ENCODE measurements at regions of chr6 and their contacts with region 1.

Region 1: DNA sequence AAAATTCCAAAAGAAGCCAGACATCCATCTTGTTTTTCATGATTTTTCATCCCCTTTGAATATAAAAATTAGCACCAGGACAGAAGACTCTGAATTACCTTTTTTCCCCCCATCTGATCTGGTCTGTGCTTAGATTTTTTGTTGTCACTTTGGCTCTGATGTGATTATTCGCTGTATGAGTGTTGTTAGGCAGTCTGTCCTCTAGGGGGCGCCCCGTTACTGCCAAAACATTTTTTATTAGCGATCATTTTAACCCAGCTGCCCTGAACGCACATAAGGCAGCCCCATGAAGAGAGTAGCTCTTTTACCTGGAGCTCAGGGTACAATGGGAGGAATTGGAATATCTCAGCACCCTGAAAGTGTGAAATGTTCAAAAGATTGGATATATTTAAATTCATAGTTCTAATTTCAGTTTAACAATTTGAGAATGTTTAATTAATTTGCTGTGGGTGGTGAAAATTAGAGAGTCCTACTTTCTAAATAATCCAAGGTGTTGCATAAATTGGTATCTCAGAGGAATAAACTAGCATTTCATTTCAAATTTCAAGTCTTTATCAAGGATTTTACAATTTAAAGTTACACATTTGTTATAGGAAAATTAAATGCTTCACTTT is 60.8 kb downstream of the PRPH2 start:
- DNase-seq: peak; percentile 74 to 90 (median 83)
- ATAC-seq: peak; percentile 68 to 87
- H3K4me3 ChIP-seq: no peak overlapping the region
- H3K27ac ChIP-seq: no peak overlapping the region
- H3K4me1 ChIP-seq: no peaks in the 10 kb centered on the region
- H3K27me3 ChIP-seq: no peaks in the 10 kb centered on the region

Region 2: DNA sequence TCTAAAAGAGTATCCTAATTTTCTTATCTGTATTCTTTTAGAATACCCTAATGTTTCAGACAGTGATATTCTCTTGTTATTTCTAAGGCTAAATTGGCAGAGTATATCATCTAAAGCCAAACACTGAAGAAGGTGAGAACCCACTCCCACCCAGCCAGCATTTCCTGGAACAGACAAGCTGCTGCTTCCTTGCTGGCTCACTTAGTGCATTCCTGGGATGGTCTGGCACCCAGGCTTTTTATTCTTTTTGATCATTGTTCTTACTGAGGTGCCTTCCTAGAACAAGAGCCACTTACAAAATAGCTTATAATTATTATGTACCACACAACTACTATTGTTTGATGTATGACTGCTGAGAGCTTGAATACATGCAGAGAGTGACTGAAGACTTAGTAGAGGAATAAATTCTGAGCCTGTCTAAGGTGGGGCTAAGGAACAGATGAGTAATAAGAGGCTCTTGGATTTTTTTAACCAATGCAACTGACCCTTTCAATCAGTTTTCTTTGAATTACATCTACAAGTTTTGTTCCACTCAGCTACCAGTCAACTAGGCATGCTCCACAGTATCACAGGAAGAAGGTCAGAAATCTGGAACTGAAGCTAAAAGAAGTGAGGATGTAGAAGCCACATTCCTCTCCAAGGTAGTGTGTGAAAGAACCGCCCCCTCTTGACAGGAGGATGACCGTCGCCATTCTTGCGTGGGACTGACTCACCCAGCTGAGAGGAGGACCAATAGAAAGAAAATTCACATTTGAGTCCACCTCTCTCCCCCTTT is 30.7 kb after region 1 on chr6:
- intact Hi-C with region 1: no loop called
- DNase-seq: peak in 1 of 3 donors; percentile 32
- ATAC-seq: peak; percentile 55 to 80
- H3K4me3 ChIP-seq: no peak overlapping the region
- H3K27ac ChIP-seq: peak overlapping the region; percentile 56
- H3K4me1 ChIP-seq: no peaks in the 10 kb centered on the region
- H3K27me3 ChIP-seq: no peaks in the 10 kb centered on the region

Region 3: DNA sequence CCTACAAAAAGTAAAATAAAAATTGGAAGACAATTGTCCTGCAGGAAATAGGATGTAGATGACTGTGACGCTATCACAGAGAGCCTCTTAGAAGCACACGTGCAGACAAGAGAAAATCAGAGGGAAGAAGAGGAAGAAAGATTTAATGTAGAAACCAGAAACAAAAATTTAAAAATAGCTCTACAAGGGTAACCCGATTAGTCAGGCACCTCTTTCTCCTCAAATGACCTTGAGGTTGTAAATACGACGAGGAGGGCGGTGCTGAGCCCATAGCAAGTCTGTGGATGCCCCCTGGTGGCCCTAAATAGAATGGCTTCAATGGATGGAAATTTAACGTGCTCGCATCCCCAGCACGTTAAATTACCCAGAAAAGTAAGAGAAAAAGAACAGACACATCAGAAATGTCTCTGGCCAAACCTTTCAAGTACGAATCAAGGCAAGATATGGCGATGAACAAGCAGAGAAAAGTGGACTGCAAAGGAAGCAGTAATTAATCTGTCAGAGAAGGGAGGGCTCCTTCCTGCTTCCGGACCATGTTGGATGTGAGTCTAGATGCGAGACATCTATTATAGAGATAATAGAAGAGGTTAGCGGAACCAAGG is 64.9 kb after region 1 on chr6:
- intact Hi-C with region 1: loop called (anchors 5 to 10 kb)
- DNase-seq: peak; percentile 69 to 87 (median 69)
- ATAC-seq: peak; percentile 94
- H3K4me3 ChIP-seq: peak overlapping the region; percentile 56
- H3K27ac ChIP-seq: peak overlapping the region; percentile 58
- H3K4me1 ChIP-seq: no peaks in the 10 kb centered on the region
- H3K27me3 ChIP-seq: no peaks in the 10 kb centered on the region

Region 4: GRCh38 chr6:42864602-42865001 is 203.0 kb after region 1 on chr6:
- intact Hi-C with region 1: loop called in 1 of 4 experiments (anchors 10 kb)
- DNase-seq: peak; percentile 67 to 81 (median 72)
- ATAC-seq: peak; percentile 55 to 80
- H3K4me3 ChIP-seq: no peak overlapping the region
- H3K27ac ChIP-seq: no peak overlapping the region
- H3K4me1 ChIP-seq: no peaks in the 10 kb centered on the region
- H3K27me3 ChIP-seq: no peaks in the 10 kb centered on the region

Region 5: DNA sequence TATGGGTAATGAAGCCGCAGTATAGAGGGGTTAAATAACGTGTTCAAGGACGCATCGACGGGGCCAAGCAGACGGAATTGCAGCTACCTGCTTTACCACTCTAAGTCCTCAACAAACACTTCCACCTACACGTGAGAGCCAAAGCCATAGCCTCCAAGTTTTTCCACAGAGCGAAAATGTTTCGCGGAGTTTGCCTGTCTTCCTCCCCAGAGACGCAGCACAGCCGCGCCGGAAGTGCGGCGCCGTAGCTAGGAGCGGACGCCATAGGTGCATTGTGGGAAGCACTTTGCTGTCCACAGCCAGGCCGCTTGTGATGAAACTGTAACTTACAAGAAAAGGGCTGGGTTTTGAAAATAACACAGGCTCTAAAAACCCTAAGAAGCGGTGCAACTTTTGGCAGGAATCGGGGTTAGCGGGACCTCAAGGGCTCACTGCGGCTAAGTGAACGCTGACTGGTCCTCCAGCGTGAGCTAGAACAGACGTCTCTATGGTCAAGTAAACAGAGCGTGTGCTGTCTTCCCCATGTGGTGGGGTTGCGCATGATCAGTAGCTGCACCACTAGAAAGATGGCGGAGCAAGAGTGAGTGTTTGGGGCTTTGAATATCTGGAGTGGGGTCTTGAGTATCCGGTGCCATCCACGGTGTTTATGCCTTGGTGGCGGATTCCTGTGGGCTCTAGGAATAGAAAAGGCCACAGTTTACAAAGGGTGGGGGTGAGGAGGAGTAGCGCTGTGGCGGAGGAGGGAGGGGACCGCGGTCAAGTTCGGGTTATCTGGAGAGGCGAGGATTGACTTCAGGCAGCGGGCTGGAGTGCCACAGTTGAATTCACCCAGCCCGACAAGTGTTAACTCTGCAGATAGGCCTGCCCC is 218.0 kb after region 1 on chr6 and contains the start of gene RPL7L1:
- intact Hi-C with region 1: loop called in 3 of 4 experiments (anchors 2 to 10 kb)
- DNase-seq: peak; percentile 78 to 93 (median 92)
- ATAC-seq: peak; percentile 98
- H3K4me3 ChIP-seq: peak within 1 kb of the TSS; percentile 64
- H3K27ac ChIP-seq: peak within 1 kb of the TSS; percentile 86
- H3K4me1 ChIP-seq: no peaks in the 10 kb centered on the region
- H3K27me3 ChIP-seq: no peaks in the 10 kb centered on the region
- total RNA-seq, gene RPL7L1: 50.5 to 59.1 (median 51.7) TPM

Measured in right cardiac atrium (tissue), 5 donors.